ENCODE measurements at regions of chr12 and their contacts with region 1.

Region 1: DNA sequence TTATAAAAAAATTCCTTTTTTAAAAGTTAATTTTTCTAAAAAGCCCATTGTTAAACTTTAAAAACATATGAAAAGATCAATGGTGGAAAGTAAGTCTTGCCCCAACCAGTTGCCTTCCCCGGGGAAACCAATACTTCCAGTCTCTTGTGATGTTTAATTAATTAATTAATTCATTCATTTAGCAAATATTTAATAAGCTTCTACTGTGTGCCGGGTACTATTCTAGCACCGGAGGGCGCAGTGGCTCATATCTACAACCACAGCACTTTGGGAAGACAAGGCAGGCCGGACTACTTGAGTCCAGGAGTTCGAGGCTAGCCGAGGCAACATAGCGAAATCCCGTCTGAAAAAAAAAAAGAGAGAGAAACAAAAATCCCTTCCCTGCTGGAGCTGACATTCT is 87.4 kb downstream of the HECTD4 start:
- DNase-seq: peak; percentile 40
- ATAC-seq: peak; percentile 54; the same call in 1 of the 2 replicates
- H3K4me3 ChIP-seq: no peak overlapping the region
- H3K27ac ChIP-seq: no peak overlapping the region
- H3K4me1 ChIP-seq: no peaks in the 10 kb centered on the region
- H3K27me3 ChIP-seq: no peaks in the 10 kb centered on the region
- CTCF ChIP-seq: peak; percentile 64

Region 2: DNA sequence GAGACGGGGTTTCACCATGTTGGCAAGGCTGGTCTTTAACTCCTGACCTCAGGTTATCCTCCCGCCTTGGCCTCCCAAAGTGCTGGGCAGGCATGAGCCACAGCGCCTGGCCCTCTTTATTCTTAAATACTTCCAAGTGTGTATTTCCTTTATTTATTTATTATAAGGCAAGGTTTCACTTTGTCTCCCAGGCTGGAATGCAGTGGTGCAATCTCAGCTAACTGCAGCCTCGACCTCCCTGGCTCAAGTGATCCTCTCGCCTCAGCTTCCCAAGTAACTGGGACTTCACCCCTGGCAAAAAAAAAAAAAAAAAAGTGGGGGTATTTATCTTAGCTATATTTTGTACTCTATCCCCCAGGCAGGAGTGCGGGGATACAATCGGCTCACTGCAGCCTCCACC is 1819.4 kb before region 1 on chr12:
- CTCF ChIA-PET with region 1: no interaction called
- POLR2A ChIA-PET with region 1: no interaction called
- intact Hi-C with region 1: no loop called
- DNase-seq: no peak
- ATAC-seq: no peak
- H3K4me3 ChIP-seq: no peak overlapping the region
- H3K27ac ChIP-seq: no peak overlapping the region
- H3K4me1 ChIP-seq: no peaks in the 10 kb centered on the region
- H3K27me3 ChIP-seq: no peaks in the 10 kb centered on the region
- CTCF ChIP-seq: no peak

Region 3: GRCh38 chr12:112261559-112261958 is 33.2 kb before region 1 on chr12:
- CTCF ChIA-PET with region 1: no interaction called
- POLR2A ChIA-PET with region 1: no interaction called
- intact Hi-C with region 1: no loop called
- DNase-seq: peak; percentile 52
- ATAC-seq: peak; percentile 66; the same call in 1 of the 2 replicates
- H3K4me3 ChIP-seq: no peak overlapping the region
- H3K27ac ChIP-seq: no peak overlapping the region
- H3K4me1 ChIP-seq: no peaks in the 10 kb centered on the region
- H3K27me3 ChIP-seq: no peaks in the 10 kb centered on the region
- CTCF ChIP-seq: peak; percentile 59

Region 4: GRCh38 chr12:112464605-112465004 is 169.8 kb after region 1 on chr12:
- CTCF ChIA-PET with region 1: interaction called, 10 read pairs
- POLR2A ChIA-PET with region 1: no interaction called
- intact Hi-C with region 1: no loop called
- DNase-seq: no peak
- ATAC-seq: no peak
- H3K4me3 ChIP-seq: no peak overlapping the region
- H3K27ac ChIP-seq: no peak overlapping the region
- H3K4me1 ChIP-seq: no peaks in the 10 kb centered on the region
- H3K27me3 ChIP-seq: no peaks in the 10 kb centered on the region
- CTCF ChIP-seq: no peak

Measured in PC-3 (cell line).